IMR-90 (cell line): ENCODE measurements at regions of chr9 and their contacts with region 1.

Region 1: DNA sequence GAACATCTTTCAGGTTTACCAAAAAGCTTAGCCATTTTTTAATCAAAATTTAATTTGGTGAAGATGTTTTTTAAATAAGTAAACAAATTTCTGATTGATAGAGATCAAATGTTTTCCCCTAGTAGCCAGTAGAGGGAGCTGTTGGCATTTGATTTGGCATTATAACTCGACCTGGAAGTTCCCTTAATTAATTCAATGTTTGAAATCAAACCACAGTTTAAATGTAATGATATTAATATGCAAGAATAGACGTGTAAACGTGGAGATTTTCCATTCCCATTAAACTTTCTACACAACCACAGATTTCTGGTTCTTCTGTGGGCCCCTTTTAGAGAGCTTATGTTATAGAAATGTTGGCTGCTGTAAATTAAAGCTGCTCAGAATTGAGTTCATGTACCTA is 148.1 kb upstream of the MPDZ start:
- DNase-seq: peak; percentile 50
- ATAC-seq: peak; percentile 42; the same call in 1 of the 2 replicates
- H3K4me3 ChIP-seq: no peak overlapping the region
- H3K27ac ChIP-seq: no peak overlapping the region
- H3K4me1 ChIP-seq: no peaks in the 10 kb centered on the region
- H3K27me3 ChIP-seq: peaks cover 15% of the 10 kb centered on the region
- CTCF ChIP-seq: peak; percentile 71
- POLR2A ChIP-seq: no peak
- RAD21 ChIP-seq: peak; percentile 77

Region 2: DNA sequence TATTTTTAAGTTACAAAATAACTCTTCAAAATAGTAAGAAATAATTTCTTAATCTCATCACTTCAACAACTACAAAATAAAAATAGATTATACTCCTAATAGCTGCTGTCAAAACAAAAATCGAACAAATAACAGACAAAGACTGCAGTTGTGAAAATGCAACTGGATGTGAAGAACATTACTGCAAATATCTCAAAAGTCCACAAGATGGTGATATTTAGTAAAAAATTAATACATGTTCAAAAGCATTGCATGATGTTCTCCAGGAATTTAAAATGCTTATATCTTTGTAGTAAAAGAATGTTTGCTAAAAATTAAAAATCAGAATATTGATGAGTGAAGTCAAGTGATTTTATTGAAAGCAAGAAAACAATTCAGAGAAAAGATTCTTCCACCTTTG is 214.2 kb before region 1 on chr9:
- CTCF ChIA-PET with region 1: no interaction called
- POLR2A ChIA-PET with region 1: no interaction called
- dilution Hi-C with region 1: no loop called
- in situ Hi-C with region 1: no loop called
- intact Hi-C with region 1: loop called (anchors 5 kb)
- DNase-seq: peak; percentile 47
- ATAC-seq: no peak
- H3K4me3 ChIP-seq: no peak overlapping the region
- H3K27ac ChIP-seq: no peak overlapping the region
- H3K4me1 ChIP-seq: no peaks in the 10 kb centered on the region
- H3K27me3 ChIP-seq: no peaks in the 10 kb centered on the region
- CTCF ChIP-seq: peak; percentile 52
- POLR2A ChIP-seq: no peak
- RAD21 ChIP-seq: peak; percentile 53

Region 3: GRCh38 chr9:14353222-14354056 is 925.9 kb after region 1 on chr9:
- CTCF ChIA-PET with region 1: no interaction called
- POLR2A ChIA-PET with region 1: no interaction called
- dilution Hi-C with region 1: no loop called
- in situ Hi-C with region 1: loop called (anchors 10 kb)
- intact Hi-C with region 1: loop called (anchors 1 kb)
- DNase-seq: peak; percentile 67
- ATAC-seq: peak; percentile 84
- H3K4me3 ChIP-seq: no peak overlapping the region
- H3K27ac ChIP-seq: no peak overlapping the region
- H3K4me1 ChIP-seq: no peaks in the 10 kb centered on the region; the same call in 1 of the 2 replicates
- H3K27me3 ChIP-seq: peaks cover 80% of the 10 kb centered on the region
- CTCF ChIP-seq: peak; percentile 85
- POLR2A ChIP-seq: no peak
- RAD21 ChIP-seq: peak; percentile 91

Region 4: DNA sequence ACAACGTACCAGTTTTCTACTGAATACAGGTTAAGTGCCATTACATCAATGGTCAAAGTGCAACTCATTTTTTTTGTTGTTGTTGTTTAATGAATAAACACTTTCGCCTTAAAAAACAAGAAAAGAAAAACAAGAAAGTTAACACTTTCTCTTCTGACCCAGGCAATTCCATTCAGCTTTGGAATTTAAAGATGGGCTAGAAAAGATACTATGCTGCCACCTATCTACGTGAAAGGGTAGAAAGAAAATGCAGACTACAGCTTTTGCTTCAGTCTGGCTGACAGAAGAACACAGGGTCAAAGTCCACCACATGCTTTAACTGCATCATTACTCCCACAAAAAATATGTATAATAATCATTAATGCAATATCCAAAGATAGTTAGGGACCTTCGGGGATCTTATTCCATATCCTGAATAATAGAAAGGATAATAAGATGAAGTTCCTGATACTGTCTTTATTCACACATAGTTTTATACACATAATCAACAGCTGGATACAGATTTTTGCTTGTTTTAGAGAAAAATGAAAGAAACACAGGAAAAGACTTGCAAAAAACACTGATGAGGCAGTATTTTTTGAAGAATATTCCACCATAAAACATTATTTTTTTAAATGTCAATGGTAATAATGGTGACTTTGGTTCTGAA is 1225.3 kb after region 1 on chr9:
- CTCF ChIA-PET with region 1: no interaction called
- POLR2A ChIA-PET with region 1: no interaction called
- dilution Hi-C with region 1: no loop called
- in situ Hi-C with region 1: no loop called
- intact Hi-C with region 1: loop called (anchors 10 kb)
- DNase-seq: peak; percentile 24
- ATAC-seq: peak; percentile 84
- H3K4me3 ChIP-seq: no peak overlapping the region
- H3K27ac ChIP-seq: no peak overlapping the region
- H3K4me1 ChIP-seq: no peaks in the 10 kb centered on the region
- H3K27me3 ChIP-seq: no peaks in the 10 kb centered on the region
- CTCF ChIP-seq: peak; percentile 59
- POLR2A ChIP-seq: no peak
- RAD21 ChIP-seq: peak; percentile 57